ENCODE measurements at regions of chr12 and their contacts with region 1.

Region 1: DNA sequence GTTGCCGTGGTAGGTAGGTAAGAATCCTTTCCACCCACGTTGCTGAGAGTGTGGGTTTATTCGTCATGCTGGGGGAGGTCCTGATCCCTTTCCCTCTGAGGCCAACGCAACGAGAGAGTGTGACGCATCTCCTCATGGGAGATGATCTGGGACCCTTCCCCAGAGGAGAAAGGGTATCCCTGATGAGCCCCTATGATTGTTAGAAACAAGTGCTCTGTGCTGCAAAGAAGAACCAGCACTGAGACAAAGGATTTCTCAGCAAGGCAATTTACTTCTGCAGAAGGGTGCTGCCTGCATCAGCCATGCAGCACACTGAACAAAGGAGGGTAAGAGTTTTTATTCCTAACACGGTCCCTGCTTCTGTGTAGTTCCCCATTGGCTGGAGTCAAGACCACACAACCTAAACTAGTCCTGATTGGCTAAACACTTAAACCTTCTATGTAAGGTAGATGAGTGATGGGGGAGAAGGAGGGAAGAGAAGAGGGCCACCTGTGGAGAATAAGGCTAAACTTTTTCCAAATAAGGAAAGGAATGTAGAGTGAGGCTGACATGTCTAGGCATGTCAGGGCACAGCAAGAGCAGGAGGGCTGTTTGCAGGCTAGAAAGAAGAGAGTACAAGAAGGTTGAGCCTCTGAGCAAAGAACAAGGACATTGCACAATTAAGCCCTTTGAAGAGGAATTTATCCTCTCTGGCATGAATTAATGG is 21.3 kb downstream of the CLEC2A start:
- DNase-seq: no peak
- ATAC-seq: no peak
- H3K4me3 ChIP-seq: no peak overlapping the region
- H3K27ac ChIP-seq: no peak overlapping the region
- H3K4me1 ChIP-seq: no peaks in the 10 kb centered on the region
- H3K27me3 ChIP-seq: no peaks in the 10 kb centered on the region
- CTCF ChIP-seq: no peak
- POLR2A ChIP-seq: no peak

Region 2: GRCh38 chr12:9745199-9745598 is 165.7 kb before region 1 on chr12:
- intact Hi-C with region 1: loop called in 1 of 10 experiments (anchors 5 kb)
- DNase-seq: no peak
- ATAC-seq: no peak
- H3K4me3 ChIP-seq: no peak overlapping the region
- H3K27ac ChIP-seq: no peak overlapping the region
- H3K4me1 ChIP-seq: peaks cover 0 to 30% (median 5%) of the 10 kb centered on the region in 12 donors
- H3K27me3 ChIP-seq: no peaks in the 10 kb centered on the region
- CTCF ChIP-seq: no peak
- POLR2A ChIP-seq: no peak

Measured in heart left ventricle (tissue), 16 donors.